Calu3 (cell line): ENCODE measurements at regions of chr1 and their contacts with region 1.

Region 1: DNA sequence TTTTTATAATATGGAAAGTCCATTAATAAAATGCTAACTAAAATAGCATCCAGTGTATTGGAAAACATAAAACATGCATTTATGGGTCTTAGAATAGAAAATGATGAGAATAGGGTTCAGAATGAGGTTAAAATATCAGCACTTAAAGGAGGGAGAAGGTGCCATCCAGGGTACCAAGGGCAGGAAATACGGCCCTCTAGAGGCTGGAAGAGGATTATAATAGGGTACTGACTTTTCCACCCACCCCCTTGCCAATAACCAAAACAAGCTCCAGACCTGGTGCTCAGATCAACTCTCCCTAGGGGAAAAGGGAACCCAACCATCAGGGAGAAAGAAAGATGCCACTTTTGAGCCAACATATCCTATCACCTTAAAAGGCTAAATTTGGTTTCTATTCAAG is 26.7 kb downstream of the ASTN1 start:
- DNase-seq: no peak
- H3K4me3 Mint-ChIP-seq: no peak overlapping the region
- H3K27ac Mint-ChIP-seq: no peak overlapping the region
- H3K4me1 Mint-ChIP-seq: no peaks in the 10 kb centered on the region
- H3K27me3 Mint-ChIP-seq: peaks cover 31% of the 10 kb centered on the region
- CTCF ChIP-seq: no peak

Region 2: DNA sequence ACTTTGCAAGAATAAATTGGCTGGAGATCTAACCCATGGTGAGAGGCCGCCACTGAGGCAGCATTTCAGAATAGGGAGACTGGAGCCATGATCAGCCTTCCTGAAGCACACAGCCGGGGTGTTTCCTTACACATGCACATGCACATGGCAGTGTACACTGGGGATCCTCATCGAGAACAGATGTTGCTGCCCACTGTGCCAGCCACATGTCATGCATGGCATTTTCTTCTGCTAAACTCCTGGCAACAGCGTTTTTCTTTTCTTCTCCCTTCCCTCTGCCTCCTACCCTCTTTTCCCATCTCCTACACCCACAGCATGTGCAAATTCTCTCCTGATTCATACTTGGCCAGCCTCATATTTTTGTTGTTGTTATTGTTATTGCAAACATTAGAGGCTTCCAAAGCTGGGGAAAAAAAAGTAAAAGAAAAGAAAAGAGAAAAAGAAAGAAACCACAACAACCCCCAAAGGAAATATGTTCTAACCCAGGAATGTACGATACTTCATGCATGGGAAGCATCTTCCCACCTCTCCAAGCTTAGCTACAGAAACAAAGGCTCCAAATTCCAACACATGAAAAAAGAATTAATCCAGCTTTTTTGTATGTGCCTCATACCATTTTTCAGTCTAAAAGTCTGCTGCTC is 317.3 kb before region 1 on chr1:
- CTCF ChIA-PET with region 1: no interaction called
- intact Hi-C with region 1: no loop called
- DNase-seq: no peak
- H3K4me3 Mint-ChIP-seq: no peak overlapping the region
- H3K27ac Mint-ChIP-seq: no peak overlapping the region
- H3K4me1 Mint-ChIP-seq: no peaks in the 10 kb centered on the region
- H3K27me3 Mint-ChIP-seq: peaks cover 26% of the 10 kb centered on the region
- CTCF ChIP-seq: no peak

Region 3: DNA sequence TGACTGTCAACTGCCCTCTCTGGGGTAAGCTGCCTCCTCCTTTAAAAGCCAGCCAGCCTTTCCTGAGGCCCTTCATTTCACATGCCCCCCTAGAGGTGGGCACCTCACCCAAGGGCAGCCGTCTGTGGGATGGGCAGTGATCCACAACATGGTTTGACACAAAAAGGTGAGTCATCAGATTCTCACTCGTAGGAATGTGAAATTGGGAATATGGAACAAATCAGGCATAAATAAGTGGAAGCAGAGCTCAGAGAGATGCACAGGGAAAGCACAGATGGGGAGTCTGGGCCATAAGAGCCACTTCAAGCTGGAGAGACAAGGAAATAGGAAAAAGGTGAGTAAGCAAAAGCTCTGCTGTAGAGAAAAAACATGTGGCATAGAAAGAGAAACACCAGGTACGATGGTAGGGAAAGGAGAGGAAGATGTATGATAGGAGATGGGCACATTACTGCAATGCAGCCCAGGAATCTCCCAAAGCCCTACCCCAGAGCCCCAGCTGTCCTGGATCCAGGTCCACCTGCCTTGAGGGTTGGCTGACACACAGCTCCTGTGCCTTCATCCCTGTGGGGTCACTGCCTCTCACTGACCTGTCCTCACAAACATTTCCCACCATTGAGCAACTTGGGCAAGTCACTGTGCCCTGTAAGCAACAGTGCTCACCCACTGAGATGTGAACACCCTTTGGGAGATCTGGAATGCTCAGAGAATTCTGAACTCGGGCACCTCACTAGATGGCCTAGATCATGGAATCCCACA is 59.9 kb before region 1 on chr1:
- CTCF ChIA-PET with region 1: no interaction called
- intact Hi-C with region 1: loop called (anchors 10 kb)
- DNase-seq: no peak
- H3K4me3 Mint-ChIP-seq: no peak overlapping the region
- H3K27ac Mint-ChIP-seq: no peak overlapping the region
- H3K4me1 Mint-ChIP-seq: no peaks in the 10 kb centered on the region
- H3K27me3 Mint-ChIP-seq: peaks cover 44% of the 10 kb centered on the region
- CTCF ChIP-seq: no peak

Region 4: GRCh38 chr1:177476676-177477075 is 338.9 kb after region 1 on chr1:
- CTCF ChIA-PET with region 1: no interaction called
- intact Hi-C with region 1: no loop called
- DNase-seq: no peak
- H3K4me3 Mint-ChIP-seq: no peak overlapping the region
- H3K27ac Mint-ChIP-seq: no peak overlapping the region
- H3K4me1 Mint-ChIP-seq: no peaks in the 10 kb centered on the region
- H3K27me3 Mint-ChIP-seq: peaks cover 71% of the 10 kb centered on the region
- CTCF ChIP-seq: no peak